Tibial artery (tissue), 4 donors: ENCODE measurements at regions of chr12 and their contacts with region 1.

Region 1: GRCh38 chr12:51449577-51450246 is 25.1 kb downstream of the SLC4A8 start:
- DNase-seq: no peak
- H3K4me3 ChIP-seq: no peak overlapping the region
- H3K27ac ChIP-seq: no peak overlapping the region
- H3K4me1 ChIP-seq: no peaks in the 10 kb centered on the region
- H3K27me3 ChIP-seq: no peaks in the 10 kb centered on the region
- CTCF ChIP-seq: no peak

Region 2: GRCh38 chr12:49615725-49616124 is 1834.0 kb before region 1 on chr12:
- intact Hi-C with region 1: no loop called
- DNase-seq: no peak
- H3K4me3 ChIP-seq: no peak overlapping the region
- H3K27ac ChIP-seq: no peak overlapping the region
- H3K4me1 ChIP-seq: no peaks in the 10 kb centered on the region
- H3K27me3 ChIP-seq: no peaks in the 10 kb centered on the region
- CTCF ChIP-seq: no peak

Region 3: DNA sequence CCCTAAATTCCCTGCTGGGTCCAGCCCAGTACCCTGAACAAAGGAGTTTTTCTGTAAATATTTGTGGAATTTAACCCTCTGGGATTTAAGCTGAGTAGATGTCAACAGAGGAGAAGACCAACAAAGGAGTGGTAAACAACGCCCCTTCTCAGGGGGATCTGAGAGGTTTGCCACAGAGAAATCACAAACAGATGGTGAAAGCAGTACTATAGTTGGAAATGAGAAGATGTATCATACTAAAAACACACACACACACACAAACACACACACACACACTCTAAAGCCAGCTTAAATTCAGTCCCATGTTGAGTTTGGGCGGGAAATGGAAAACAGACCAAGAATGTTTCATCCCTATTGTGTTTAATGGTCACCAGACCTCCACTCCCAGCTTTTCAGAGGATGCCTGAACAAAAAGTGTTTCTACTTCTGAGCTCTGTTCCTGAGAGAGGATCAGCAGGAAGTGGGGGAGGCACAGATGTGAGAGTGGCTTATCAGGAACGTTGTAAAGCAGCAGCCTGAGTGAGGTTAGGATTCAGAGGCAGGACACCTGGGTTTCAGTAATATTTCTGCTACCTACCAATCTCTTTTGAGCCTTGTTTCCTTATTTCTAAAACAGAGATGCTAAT is 128.9 kb before region 1 on chr12:
- intact Hi-C with region 1: no loop called
- DNase-seq: no peak
- H3K4me3 ChIP-seq: no peak overlapping the region
- H3K27ac ChIP-seq: no peak overlapping the region
- H3K4me1 ChIP-seq: no peaks in the 10 kb centered on the region
- H3K27me3 ChIP-seq: peaks cover 0 to 9% of the 10 kb centered on the region in 2 donors
- CTCF ChIP-seq: no peak

Region 4: DNA sequence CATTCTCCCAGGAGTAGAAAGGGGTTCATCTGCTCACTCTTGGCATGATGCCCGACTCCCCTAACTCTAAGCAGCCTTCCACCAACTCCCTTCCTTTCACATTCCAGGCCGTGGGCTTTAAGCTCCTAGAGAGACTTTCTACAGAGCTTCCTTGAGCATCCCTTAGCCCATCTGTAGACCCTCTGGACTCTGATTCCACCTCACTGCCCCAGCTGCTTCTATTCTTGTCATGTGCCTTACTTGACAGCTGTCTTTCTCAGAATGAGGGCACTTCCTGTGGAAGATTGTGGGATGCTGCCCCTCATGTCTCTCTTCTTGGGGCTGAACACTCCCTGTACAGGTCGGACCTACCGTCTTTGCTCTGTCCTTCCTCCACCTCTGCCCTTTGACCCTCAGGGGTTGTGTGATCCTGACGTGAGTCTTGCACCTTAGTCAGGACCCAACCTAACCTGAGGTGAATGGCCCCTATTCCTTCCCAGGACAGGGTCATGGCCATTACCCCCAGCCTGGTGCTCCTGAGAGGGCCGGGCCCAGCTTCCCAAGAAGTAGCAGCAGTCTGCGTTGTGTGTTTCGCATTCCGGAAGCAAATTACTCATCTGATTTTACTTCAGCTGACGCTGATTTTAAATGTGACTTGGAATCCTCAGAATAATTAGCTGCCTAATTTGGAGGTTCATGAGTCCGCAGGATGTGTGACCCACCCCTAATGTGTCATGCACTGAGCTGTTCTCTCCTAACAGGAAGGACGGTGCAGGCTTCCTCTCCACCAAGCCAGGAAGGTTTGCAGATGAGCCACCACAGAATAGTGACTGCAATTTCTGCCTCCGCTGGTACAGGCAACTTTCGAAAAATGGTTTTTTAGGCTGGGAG is 55.8 kb before region 1 on chr12:
- intact Hi-C with region 1: loop called (anchors 2 kb)
- DNase-seq: no peak
- H3K4me3 ChIP-seq: no peak overlapping the region
- H3K27ac ChIP-seq: no peak overlapping the region
- H3K4me1 ChIP-seq: peaks cover 0 to 28% (median 14%) of the 10 kb centered on the region in 4 donors
- H3K27me3 ChIP-seq: peaks cover 0 to 28% of the 10 kb centered on the region in 2 donors
- CTCF ChIP-seq: no peak